ENCODE measurements at regions of chr5 and their contacts with region 1.

Region 1: DNA sequence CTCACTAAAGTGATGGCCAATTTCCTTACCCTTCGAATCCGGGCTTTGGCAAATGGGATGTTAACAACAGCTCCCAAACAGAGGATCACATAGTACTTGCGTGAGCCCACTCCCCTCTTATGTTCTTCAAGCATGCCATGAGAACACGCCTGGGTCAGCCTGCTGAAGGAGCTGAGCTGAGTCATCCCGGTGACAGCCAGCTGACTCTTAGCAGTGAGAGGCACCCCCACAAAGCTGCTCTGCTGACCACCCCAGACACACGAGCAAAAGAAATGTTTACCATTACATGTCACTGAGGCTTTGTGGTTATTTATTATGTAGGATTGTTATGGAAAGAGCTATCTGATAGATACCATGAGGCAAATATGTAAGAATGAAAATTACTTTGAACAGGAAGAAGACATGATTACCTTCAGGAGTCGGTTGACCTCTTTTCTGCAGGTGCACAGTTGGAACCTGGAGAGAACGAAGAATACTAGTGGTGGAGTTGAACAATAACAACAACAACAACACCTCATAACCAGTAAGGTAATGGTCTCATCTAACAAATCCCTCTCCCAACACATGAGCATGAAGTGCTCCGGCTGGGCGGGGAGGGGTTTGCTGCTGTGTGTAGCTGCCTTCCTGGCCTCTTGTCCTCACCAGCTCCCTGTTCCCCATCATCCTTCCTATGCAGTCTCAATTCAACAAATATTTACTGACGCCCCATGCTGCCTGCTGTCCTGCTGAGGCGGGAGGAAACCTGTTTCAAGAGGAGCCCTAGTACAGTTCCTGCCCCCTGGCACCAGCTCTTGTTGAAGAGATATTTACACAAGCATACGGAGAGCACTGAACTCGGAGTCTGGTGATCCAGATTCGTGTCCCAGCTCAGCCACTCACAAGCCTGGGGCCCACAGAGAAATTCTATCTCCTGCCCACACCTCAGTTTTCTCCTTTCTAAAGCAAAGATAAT is 69.4 kb upstream of the LHFPL2 start:
- DNase-seq: no peak
- ATAC-seq: no peak
- H3K4me3 ChIP-seq: no peak overlapping the region
- H3K27ac ChIP-seq: no peak overlapping the region
- H3K4me1 ChIP-seq: peaks cover 15% of the 10 kb centered on the region
- H3K27me3 ChIP-seq: no peaks in the 10 kb centered on the region
- CTCF ChIP-seq: no peak

Region 2: DNA sequence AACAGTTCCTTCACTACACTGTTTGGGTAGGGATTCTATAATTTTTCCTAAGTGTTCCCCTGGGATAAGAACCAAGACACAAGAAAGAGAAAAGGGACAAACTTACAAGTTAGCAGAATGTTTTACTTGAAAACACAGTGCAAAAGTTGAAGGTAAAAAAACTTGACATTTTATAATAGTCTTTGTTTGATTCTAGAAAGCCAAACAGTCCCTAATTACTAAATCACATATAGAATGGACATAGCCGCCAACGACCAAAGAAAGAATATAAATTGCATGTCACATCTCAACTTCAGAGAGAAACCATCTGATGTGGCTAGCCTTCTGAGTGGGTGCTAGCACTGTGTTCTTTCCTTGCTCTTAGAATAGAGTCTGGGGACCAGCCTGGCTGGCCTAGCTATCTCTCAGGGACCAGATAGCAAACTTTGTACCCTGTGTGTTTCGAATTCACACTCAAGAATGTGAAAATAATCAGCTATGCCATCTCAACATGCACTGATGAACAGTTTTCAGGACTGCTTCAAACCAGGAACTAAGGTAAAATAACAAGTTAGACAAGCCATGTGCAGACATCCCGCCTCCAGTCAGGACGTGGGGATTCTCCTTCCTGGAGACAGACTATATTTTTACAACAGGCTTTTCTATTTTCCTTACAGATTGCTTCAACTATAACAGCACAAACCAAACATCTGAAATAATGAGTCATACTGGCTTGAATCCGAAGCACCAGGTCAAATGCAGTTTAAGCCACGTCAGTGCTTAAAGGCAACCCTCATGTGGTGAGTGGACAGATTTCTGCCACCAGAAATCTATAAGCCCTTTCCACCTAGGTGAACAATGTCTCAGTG is 123.1 kb before region 1 on chr5:
- CTCF ChIA-PET with region 1: no interaction called
- POLR2A ChIA-PET with region 1: no interaction called
- intact Hi-C with region 1: loop called (anchors 5 kb)
- DNase-seq: peak; percentile 93
- ATAC-seq: peak; percentile 66
- H3K4me3 ChIP-seq: no peak overlapping the region
- H3K27ac ChIP-seq: peak overlapping the region; percentile 99
- H3K4me1 ChIP-seq: peaks cover 87% of the 10 kb centered on the region
- H3K27me3 ChIP-seq: no peaks in the 10 kb centered on the region
- CTCF ChIP-seq: no peak

Region 3: GRCh38 chr5:78648359-78649210 is 69.4 kb before region 1 on chr5 and contains the start of gene LHFPL2:
- CTCF ChIA-PET with region 1: no interaction called
- POLR2A ChIA-PET with region 1: interaction called, 3 read pairs
- intact Hi-C with region 1: loop called (anchors 5 kb)
- DNase-seq: peak; percentile 59
- ATAC-seq: peak; percentile 74
- H3K4me3 ChIP-seq: peak within 1 kb of the TSS; percentile 77
- H3K27ac ChIP-seq: peak within 1 kb of the TSS; percentile 70
- H3K4me1 ChIP-seq: peaks cover 26% of the 10 kb centered on the region
- H3K27me3 ChIP-seq: no peaks in the 10 kb centered on the region
- CTCF ChIP-seq: no peak
- total RNA-seq, gene LHFPL2: 19.4 and 21.7 TPM in 2 replicates

Region 4: GRCh38 chr5:78671609-78672008 is 46.3 kb before region 1 on chr5:
- CTCF ChIA-PET with region 1: no interaction called
- POLR2A ChIA-PET with region 1: no interaction called
- intact Hi-C with region 1: loop called (anchors 5 kb)
- DNase-seq: peak; percentile 17
- ATAC-seq: peak; percentile 32
- H3K4me3 ChIP-seq: no peak overlapping the region
- H3K27ac ChIP-seq: no peak overlapping the region
- H3K4me1 ChIP-seq: peaks cover 10% of the 10 kb centered on the region; the same call in 1 of the 2 replicates
- H3K27me3 ChIP-seq: no peaks in the 10 kb centered on the region
- CTCF ChIP-seq: no peak

Region 5: DNA sequence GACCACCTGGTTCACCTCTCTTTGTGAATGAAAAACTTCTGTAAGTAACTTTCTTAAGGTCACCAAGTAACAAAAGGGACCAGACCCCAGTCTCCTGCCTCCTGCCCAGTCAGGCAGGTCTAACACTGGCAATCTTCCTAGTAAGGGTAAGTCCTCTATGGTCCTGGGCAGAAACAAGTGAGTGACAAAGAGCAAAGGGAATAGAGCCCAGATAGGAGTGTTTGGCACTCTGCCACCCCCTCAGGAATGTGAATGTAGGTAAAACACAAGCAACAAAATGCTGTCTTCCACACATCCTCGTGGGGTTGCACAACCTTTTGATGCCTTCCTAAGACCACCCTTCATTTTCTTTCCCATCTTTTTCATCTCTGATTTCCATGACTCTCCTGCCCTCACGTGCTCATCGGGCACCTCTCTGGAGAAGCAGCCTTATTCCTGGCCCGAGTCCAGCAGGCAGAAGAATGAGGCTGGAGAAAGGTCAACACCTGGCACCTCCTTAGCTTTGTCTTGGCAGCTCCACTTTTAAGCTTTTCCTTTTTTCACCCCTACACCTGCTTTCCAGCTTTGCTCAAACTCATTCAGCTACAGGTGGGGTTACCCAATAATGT is 20.8 kb after region 1 on chr5:
- CTCF ChIA-PET with region 1: no interaction called
- POLR2A ChIA-PET with region 1: interaction called, 20 read pairs
- intact Hi-C with region 1: no loop called
- DNase-seq: peak; percentile 23
- ATAC-seq: no peak
- H3K4me3 ChIP-seq: no peak overlapping the region
- H3K27ac ChIP-seq: no peak overlapping the region
- H3K4me1 ChIP-seq: no peaks in the 10 kb centered on the region
- H3K27me3 ChIP-seq: no peaks in the 10 kb centered on the region
- CTCF ChIP-seq: no peak